ENCODE measurements at regions of chr7 and their contacts with region 1.

Region 1: DNA sequence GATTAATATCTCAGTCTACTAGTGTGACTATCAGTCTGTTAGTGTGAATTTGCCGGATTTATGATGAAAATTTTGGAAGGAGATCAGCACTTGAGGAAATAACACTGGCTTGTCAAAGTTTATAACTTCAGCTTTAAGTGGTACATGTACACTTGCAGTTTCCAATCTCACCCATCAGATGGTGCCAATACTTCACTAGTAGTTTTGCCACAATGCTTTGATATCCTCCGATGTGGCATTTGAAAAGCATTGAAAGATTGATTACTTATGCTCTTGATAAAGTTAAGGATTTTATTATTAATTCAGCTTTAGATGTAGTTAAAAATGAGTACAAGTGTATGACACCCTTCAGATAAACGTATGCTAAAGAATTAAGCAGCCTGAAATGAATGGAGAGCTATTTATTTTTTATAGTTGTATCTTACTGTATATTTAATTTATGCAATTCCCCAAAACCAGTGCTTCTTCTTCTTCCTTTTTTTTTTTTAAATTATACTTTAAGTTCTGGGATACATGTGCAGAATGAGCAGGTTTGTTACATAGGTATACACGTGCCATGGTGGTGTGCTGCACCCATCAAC is 98.2 kb downstream of the ANLN start:
- DNase-seq: no peak
- H3K4me3 ChIP-seq: no peak overlapping the region
- H3K27ac ChIP-seq: no peak overlapping the region
- H3K4me1 ChIP-seq: no peaks in the 10 kb centered on the region
- H3K27me3 ChIP-seq: no peaks in the 10 kb centered on the region
- CTCF ChIP-seq: peak; percentile 33 to 92 (median 78)
- POLR2A ChIP-seq: no peak

Region 2: DNA sequence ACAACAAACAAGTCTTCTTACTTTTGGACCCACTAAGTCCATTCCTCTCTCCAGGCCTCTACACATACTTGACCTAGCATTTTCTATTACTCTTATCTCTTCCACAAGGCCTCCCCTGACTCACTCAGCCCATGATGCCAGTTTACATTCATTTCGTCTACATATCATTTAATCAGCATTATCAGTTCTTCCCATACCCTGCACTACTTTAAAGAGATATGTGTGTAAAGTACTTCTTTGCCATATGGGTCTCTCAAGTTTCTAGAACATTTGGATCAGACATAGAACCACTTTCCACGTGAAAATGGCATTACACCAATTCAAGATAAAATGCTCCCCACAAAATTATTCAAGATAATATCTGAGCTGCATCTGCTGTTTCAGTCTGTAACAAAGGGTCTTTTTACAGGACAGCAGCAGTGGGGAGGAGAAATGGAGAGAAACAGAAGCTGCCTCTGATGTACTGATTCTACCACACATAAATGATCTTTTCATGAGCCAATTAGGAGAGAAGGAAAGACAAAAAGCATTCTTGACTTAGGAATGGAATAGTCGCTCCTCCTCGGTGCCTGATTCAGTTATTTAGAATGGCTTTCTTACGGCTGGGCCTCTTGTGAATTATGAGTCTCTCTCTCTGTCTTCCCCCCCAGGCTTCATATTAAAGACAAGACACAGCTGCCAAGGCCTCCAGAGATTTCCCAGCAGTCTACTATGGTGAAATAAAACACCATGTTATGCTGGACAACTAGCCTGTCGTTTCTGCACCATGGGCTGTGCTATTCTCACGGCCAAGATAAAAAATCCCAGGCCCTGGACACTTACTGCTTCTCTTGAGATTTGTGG is 733.9 kb before region 1 on chr7:
- intact Hi-C with region 1: no loop called
- DNase-seq: no peak
- H3K4me3 ChIP-seq: no peak overlapping the region
- H3K27ac ChIP-seq: no peak overlapping the region
- H3K4me1 ChIP-seq: no peaks in the 10 kb centered on the region
- H3K27me3 ChIP-seq: no peaks in the 10 kb centered on the region
- CTCF ChIP-seq: no peak
- POLR2A ChIP-seq: no peak

Region 3: DNA sequence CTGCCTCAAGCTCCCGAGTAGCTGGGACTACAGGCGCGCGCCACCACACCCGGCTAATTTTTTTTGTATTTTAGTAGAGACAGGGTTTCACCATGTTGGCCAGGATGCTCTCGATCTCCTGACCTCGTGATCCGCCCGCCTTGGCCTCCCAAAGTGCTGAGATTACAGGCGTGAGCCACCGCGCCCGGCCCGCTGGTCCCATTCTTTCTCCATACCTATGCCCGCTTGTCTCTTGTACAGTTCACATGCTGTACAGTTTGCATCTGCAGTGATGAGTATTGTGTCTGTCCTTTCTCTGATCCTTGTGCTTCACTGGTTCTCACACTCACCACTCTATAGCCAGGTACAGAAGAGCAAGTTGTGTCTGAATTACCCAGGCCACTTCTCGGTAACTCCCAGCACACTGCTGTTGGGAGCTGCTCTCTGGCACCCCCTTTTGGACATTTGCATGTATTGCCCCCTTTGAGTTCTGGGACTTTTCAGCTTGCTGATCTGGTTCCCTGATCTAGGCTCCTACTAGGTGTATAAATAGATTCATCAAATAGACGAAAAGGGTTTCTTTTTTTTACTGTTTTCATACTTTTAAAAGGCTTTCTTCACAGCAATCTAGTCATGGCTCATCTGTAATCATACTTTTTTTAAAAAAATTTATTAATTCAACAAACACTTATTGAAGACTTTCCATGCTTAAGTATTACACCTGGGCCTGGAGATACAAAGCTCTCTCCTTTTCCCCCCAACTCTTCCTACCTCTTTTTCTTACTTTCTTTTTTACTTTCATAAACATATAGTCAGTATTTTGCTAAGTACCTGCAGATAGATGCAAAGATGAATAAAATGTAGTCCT is 183.0 kb after region 1 on chr7:
- intact Hi-C with region 1: loop called (anchors 5 kb)
- DNase-seq: peak; percentile 53 to 64
- H3K4me3 ChIP-seq: no peak overlapping the region
- H3K27ac ChIP-seq: no peak overlapping the region
- H3K4me1 ChIP-seq: no peaks in the 10 kb centered on the region
- H3K27me3 ChIP-seq: no peaks in the 10 kb centered on the region
- CTCF ChIP-seq: peak; percentile 72 to 89 (median 81)
- POLR2A ChIP-seq: no peak

Region 4: DNA sequence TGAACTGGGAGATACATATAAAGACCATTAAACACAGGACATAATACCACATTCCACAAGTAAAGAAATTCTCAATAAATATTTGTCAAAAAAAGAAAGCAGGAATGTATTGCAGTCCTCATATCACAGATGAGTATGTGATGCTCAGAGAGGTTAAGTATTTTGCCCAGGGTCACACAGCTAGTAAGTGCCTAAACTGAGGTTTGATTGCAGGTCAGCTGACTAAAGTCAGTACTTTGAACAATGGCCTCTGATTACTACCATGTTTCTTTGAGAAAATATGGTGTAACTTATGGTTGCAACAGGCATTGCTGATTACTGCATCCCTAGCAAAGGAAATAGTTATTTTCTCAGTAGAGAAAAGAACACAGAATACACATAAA is 693.7 kb after region 1 on chr7:
- intact Hi-C with region 1: loop called (anchors 5 kb)
- DNase-seq: no peak
- H3K4me3 ChIP-seq: no peak overlapping the region
- H3K27ac ChIP-seq: peak overlapping the region in 2 of 3 donors; percentile 19 to 50
- H3K4me1 ChIP-seq: peaks cover 15 to 16% of the 10 kb centered on the region in 2 donors
- H3K27me3 ChIP-seq: no peaks in the 10 kb centered on the region
- CTCF ChIP-seq: no peak
- POLR2A ChIP-seq: no peak